ENCODE measurements at regions of chr1 and their contacts with region 1.

Region 1: GRCh38 chr1:25031966-25032667 is 102.0 kb upstream of the RUNX3 start:
- DNase-seq: peak; percentile 80
- H3K4me3 Mint-ChIP-seq: peak overlapping the region; percentile 88
- H3K27ac Mint-ChIP-seq: peak overlapping the region; percentile 98
- H3K4me1 Mint-ChIP-seq: peaks cover 77% of the 10 kb centered on the region
- H3K27me3 Mint-ChIP-seq: no peaks in the 10 kb centered on the region

Region 2: DNA sequence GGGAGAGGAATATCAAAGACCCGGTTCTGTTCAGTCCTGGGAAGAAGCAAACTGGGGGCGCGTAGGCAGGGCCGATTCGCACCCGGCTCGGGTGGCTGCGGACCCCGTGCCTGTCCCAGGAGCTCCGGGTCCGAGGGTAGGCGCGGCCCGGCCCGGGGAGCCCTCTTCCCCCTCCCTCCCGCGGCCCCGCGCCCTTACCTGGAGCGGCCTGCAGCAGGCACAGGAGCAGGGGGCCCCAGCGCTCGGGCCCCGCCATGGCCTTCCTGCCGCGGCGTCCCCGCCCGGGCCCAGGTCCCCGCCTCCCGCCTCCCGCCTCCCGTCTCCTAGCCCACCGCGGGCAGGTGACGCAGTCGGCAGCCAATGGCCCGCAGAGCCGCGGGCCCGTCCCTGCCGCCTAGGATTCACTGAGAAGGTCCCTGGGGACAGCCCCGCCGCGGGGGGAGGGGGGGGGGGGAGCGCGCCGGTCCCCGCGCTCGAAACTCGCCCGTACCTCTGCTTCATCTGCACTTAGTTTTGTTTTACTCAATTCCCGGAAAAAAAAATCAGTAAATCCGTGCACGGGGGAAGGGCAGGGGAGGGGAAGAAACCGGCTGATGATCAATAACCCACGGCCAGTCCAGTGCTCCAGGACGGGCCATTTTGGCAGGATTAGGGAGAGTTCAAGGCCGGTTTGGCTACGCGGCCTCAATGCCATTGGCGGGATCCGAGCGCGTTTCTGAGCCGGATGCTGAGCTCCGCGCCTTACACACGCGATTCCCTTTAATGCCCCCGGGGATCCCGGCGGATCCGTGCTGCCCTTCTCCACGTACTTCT is 844.9 kb before region 1 on chr1 and contains the start of gene IFNLR1:
- intact Hi-C with region 1: loop called (anchors 5 kb)
- DNase-seq: peak; percentile 90
- H3K4me3 Mint-ChIP-seq: peak within 1 kb of the TSS; percentile 82
- H3K27ac Mint-ChIP-seq: peak within 1 kb of the TSS; percentile 78
- H3K4me1 Mint-ChIP-seq: peaks cover 34% of the 10 kb centered on the region
- H3K27me3 Mint-ChIP-seq: peaks cover 2% of the 10 kb centered on the region
- total RNA-seq, gene IFNLR1: 5.3 and 5.6 TPM in 2 replicates

Region 3: GRCh38 chr1:24964811-24965570 is 67.1 kb before region 1 on chr1:
- intact Hi-C with region 1: loop called (anchors 1 kb)
- DNase-seq: peak; percentile 98
- H3K4me3 Mint-ChIP-seq: peak overlapping the region; percentile 96
- H3K27ac Mint-ChIP-seq: peak overlapping the region; percentile 97
- H3K4me1 Mint-ChIP-seq: peaks cover 71% of the 10 kb centered on the region
- H3K27me3 Mint-ChIP-seq: no peaks in the 10 kb centered on the region

Region 4: DNA sequence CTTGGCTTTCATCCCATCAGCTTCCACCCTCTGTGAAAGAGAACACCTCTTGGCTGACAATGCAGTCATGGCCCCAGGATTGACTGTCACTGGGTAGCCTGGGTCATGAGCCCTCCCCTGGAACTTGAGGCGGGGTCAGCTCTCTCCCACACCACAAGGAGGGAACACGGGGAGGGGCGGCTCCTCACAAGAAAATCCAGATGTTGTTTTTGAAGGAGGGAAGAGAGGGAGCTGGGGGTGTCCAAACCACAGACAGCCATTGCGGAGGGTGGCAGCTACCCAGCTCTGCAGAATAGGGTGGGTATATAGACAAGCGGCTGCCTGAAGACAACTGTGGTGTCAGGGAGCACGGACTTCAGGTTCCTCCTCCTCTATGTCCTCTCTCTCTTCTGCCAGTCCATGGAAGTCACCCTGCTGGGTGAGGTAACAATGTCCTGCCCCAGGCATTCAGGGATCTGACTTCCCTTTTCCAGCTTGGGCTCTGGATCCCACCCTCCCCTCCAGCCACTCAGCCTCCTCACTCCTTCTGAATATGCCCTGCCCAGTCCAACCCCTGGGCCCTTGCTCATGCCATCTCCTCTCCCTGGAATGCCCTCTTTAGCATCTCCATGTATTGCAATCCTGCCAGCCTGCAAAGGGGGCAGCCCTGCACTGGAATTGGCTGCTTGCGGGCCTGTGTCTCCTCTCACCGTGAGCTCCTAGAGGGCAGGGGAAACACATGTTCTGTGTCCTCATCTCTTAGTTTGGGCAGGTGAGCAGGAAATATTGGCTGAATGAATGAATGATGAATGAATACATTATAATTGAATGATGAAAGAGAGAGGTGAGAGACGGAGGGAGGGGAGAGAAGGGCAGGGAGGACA is 41.1 kb before region 1 on chr1:
- intact Hi-C with region 1: loop called (anchors 2 kb)
- DNase-seq: no peak
- H3K4me3 Mint-ChIP-seq: peak overlapping the region; percentile 83
- H3K27ac Mint-ChIP-seq: peak overlapping the region; percentile 100
- H3K4me1 Mint-ChIP-seq: peaks cover 80% of the 10 kb centered on the region
- H3K27me3 Mint-ChIP-seq: no peaks in the 10 kb centered on the region

Region 5: DNA sequence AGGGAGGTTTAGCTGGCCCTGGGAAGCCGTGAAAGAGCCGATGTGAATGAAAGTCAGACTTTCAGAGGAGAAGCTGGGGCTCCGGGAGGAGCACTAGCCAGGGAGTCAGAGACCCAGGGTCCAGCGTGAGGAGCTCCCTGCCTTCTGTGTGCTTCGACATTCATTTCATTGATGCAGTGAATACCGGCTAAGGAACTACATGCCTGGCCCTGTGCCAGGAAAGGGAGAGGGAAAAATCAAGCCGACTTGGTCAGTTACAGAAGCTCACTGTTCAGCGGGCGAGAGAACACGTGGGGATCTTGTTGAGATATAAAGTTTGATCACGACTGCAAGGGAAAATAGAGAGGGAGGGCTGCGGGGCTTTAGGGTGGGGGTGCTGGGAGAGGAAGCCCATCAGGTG is 25.3 kb before region 1 on chr1:
- intact Hi-C with region 1: loop called (anchors 1 kb)
- DNase-seq: no peak
- H3K4me3 Mint-ChIP-seq: no peak overlapping the region
- H3K27ac Mint-ChIP-seq: peak overlapping the region; percentile 19
- H3K4me1 Mint-ChIP-seq: peaks cover 63% of the 10 kb centered on the region
- H3K27me3 Mint-ChIP-seq: no peaks in the 10 kb centered on the region

Region 6: DNA sequence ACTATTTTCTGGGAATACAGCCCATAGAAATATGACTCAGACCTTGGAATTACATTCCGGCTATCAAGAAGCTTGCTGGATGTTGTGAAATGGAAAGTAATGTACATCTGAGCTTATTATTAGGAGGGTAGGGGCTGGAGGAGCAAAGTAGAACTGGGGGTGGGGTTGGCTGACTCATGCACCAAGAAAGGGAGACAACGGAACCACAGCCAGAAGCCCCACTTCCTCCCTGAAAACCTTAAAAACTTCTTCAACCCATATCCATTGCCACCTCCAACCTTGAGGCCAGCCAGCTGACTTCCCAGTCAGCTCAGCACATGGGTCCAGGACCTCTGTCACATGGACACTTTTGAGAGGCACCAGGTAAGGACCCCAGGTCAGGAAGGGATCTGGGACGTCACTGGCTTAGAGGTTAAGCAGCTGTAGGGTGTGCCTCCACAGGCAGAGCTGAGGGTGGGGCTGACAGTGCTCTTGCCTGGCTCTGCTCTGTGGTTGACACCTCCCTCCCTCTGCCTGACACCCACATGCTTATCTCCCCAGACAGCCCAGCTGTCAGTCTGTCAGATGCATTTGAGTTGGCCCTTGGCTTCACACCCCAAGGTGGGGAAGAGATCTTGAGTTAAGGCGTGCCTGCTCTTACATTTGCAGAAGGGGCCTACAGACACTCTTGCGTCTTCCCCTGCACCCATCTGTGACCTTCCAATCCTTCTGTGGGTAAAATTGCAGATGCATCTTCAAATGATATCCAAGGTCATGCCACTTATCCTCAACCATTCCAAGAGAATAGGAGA is 1346.2 kb after region 1 on chr1:
- intact Hi-C with region 1: loop called (anchors 5 kb)
- DNase-seq: peak; percentile 94
- H3K4me3 Mint-ChIP-seq: peak overlapping the region; percentile 75
- H3K27ac Mint-ChIP-seq: peak overlapping the region; percentile 88
- H3K4me1 Mint-ChIP-seq: peaks cover 57% of the 10 kb centered on the region
- H3K27me3 Mint-ChIP-seq: no peaks in the 10 kb centered on the region